ENCODE measurements at regions of chr22 and their contacts with region 1.

Region 1: GRCh38 chr22:17562906-17563870 is at the start of gene SLC25A18:
- DNase-seq: peak in 1 of 2 experiments; percentile 56
- H3K4me3 ChIP-seq: peak within 1 kb of the TSS in 3 of 4 experiments; percentile 7 to 34 (median 21); a peak in 3 of 8 replicates
- H3K27ac ChIP-seq: peak within 1 kb of the TSS; percentile 59; the same call in 1 of the 2 replicates
- H3K4me1 ChIP-seq: peaks cover 10 to 20% (median 15%) of the 10 kb centered on the region in 4 experiments; a peak in 6 of 7 replicates
- H3K27me3 ChIP-seq: no peaks in the 10 kb centered on the region
- CTCF ChIP-seq: peak; percentile 21 to 60 (median 32); a peak in 2 of 4 replicates
- EP300 ChIP-seq: peak in 1 of 2 experiments; percentile 20; a peak in 1 of 3 replicates
- POLR2A ChIP-seq: peak; percentile 36 to 48; a peak in 2 of 3 replicates
- RAD21 ChIP-seq: peak; percentile 19 to 28; a peak in 3 of 4 replicates
- total RNA-seq, gene SLC25A18: 2.2 and 2.8 TPM in 2 replicates

Region 2: DNA sequence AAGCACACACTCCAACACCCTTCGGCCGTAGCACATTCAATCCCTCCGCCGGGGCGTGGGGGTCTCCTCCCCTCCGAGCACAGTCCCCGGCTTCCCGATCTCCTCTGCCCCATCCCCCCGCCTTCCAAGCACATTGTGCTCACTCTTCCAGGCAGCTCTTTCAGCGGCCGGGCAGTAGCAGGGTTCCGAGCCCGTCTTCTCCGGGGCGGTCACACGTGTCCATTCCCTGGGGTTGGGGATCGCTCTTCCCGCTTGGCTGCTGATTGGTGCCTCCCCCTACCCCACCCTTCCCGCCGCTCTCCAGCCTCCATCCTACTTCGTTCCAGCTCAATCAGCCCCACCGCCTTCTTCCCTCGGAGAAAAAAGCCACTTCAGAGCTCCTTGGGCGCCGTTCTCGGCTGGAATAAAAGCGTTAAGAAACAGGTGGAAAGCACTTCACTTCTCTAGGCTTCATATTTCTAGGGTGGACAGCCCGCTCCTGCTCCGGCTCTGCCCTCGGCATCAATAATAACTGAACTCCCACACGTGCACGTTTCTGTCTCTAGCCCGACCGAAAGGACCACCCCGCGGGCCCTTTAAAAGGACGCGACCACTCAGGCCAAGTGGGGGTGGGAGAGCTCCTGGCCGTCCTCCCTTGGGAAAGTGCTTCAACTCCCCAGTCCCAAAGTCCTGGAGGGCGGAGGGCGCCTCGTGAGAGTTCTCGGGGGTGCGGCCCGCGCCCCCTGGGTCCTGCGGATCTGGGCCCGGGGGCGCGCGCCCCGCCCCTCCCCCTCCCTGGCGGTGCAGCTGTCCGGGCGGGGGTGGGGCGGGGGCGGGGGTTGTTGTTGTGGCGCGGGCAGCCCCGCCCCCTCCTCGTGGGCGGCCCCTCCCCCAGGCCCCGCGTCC is 194.4 kb before region 1 on chr22:
- CTCF ChIA-PET with region 1: no interaction called
- POLR2A ChIA-PET with region 1: no interaction called
- DNase-seq: peak; percentile 60 to 84
- H3K4me3 ChIP-seq: peak overlapping the region; percentile 65 to 92 (median 81)
- H3K27ac ChIP-seq: peak overlapping the region; percentile 91
- H3K4me1 ChIP-seq: peaks cover under 1 to 15% (median 6%) of the 10 kb centered on the region in 4 experiments; a peak in 6 of 7 replicates
- H3K27me3 ChIP-seq: no peaks in the 10 kb centered on the region
- CTCF ChIP-seq: no peak
- EP300 ChIP-seq: peak in 1 of 2 experiments; percentile 89; a peak in 2 of 3 replicates
- POLR2A ChIP-seq: peak; percentile 18 to 85
- RAD21 ChIP-seq: peak in 1 of 2 experiments; percentile 3; a peak in 2 of 4 replicates

Region 3: DNA sequence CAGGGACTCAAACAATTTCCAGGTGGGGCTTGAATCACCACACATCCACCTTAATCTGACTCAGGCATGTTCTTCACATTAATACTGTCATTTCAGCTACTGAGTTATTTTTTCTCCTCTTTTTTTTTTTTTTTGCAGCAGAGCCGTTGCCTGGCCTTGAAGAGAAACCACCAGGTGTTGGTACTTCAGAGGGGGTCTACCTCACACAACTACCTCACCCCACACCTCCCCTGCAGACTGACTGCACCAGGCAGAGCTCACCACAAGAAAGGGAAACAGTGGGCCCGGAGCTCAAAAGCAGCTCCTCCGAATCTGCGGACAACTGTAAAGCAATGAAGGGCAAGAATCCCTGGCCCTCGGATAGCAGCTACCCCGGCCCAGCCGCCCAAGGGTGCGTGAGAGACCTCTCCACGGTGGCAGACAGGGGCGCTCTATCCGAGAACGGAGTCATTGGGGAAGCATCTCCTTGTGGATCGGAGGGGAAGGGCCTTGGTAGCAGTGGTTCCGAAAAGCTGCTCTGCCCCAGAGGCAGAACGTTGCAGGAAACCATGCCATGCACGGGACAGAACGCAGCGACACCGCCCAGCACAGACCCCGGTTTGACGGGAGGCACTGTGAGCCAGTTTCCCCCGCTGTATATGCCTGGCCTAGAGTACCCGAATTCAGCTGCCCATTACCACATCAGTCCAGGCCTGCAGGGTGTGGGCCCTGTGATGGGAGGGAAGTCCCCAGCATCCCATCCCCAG is 15.0 kb before region 1 on chr22:
- CTCF ChIA-PET with region 1: interaction called, 14 read pairs
- POLR2A ChIA-PET with region 1: interaction called, 5 read pairs
- DNase-seq: no peak
- H3K4me3 ChIP-seq: no peak overlapping the region
- H3K27ac ChIP-seq: no peak overlapping the region
- H3K4me1 ChIP-seq: no peaks in the 10 kb centered on the region
- H3K27me3 ChIP-seq: no peaks in the 10 kb centered on the region
- CTCF ChIP-seq: no peak; a peak in 1 of 4 replicates
- EP300 ChIP-seq: no peak
- POLR2A ChIP-seq: no peak; a peak in 1 of 3 replicates
- RAD21 ChIP-seq: no peak

Region 4: DNA sequence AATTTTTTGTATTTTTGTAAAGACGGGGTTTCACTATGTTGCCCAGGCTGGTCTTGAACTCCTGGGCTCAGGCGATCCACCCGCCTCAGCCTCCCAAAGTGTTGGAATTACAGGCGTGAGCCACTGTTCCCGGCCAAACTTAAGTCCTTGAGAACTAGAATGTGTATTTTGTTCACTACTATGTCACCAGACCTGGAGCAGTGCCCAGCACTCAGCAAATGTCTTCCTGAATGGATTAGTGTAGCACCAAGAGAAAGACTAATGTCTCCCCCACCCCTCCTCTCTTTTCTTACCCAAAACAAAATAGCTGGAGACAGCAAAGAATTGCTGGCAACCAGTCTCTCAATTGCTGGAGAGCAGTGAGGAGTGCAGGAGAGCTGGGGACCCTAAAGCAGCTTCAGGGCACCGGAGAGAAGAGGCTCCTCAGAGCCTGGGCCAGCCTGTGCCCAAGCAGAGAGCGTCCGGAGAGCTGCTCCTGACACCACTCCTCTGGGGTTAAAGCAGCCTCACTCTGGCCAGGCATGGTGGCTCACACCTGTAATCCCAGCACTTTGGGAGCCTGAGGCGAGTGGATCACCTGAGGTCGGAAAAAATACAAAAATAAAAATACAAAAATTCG is 15.1 kb after region 1 on chr22:
- CTCF ChIA-PET with region 1: interaction called, 27 read pairs
- POLR2A ChIA-PET with region 1: interaction called, 18 read pairs
- DNase-seq: no peak
- H3K4me3 ChIP-seq: no peak overlapping the region
- H3K27ac ChIP-seq: no peak overlapping the region
- H3K4me1 ChIP-seq: peaks cover 0 to 3% (median 0%) of the 10 kb centered on the region in 4 experiments; a peak in 4 of 7 replicates
- H3K27me3 ChIP-seq: no peaks in the 10 kb centered on the region
- CTCF ChIP-seq: no peak
- EP300 ChIP-seq: no peak
- POLR2A ChIP-seq: no peak
- RAD21 ChIP-seq: no peak

Region 5: DNA sequence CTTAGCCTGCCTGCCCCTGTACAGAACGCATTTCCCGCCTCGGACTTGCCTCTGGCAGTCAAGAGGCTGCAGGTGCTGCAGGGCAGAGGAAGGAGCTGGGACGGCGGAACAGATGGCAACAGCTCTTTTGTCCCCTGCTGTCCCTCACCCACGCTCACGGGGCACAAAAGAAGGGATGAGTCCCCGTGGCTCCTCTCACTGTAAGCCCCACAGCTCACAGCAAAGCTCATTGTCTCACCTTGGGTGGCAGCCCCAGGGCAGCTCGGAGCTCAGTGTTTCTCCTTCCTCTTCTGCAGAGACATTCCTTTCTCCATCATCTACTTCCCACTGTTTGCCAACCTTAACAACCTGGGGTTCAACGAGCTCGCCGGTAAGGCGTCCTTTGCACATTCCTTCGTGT is 24.4 kb after region 1 on chr22:
- CTCF ChIA-PET with region 1: interaction called, 27 read pairs
- POLR2A ChIA-PET with region 1: interaction called, 13 read pairs
- DNase-seq: no peak
- H3K4me3 ChIP-seq: no peak overlapping the region
- H3K27ac ChIP-seq: no peak overlapping the region
- H3K4me1 ChIP-seq: no peaks in the 10 kb centered on the region
- H3K27me3 ChIP-seq: no peaks in the 10 kb centered on the region
- CTCF ChIP-seq: no peak
- EP300 ChIP-seq: no peak
- POLR2A ChIP-seq: no peak
- RAD21 ChIP-seq: no peak

Measured in H1 (cell line).